A673 (cell line): ENCODE measurements at regions of chr2 and their contacts with region 1.

Region 1: DNA sequence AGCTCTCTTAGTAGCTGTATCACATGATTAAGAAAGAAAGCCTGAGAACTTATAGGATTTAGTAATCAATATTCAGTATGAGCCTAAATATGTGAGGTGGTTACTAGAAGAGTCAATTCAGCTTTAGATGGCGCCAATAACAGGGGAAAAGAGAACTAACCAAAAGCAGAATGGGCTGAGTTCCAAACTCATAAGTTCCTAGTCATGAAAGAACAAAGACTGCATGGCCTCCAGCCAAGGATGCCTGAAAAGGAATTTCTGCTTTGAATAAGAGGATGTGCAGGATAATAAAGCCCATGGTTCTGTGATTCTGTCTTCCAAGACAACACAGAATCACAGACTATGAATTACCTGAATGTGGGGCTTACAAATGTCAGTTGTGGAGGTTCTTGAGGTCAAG is 196.5 kb downstream of the SATB2 start:
- DNase-seq: peak; percentile 90
- H3K4me3 ChIP-seq: no peak overlapping the region
- H3K27ac ChIP-seq: no peak overlapping the region
- H3K4me1 ChIP-seq: no peaks in the 10 kb centered on the region
- H3K27me3 ChIP-seq: no peaks in the 10 kb centered on the region
- CTCF ChIP-seq: peak; percentile 47

Region 2: GRCh38 chr2:199596549-199596948 is 335.3 kb after region 1 on chr2:
- CTCF ChIA-PET with region 1: no interaction called
- POLR2A ChIA-PET with region 1: no interaction called
- intact Hi-C with region 1: loop called (anchors 10 kb)
- DNase-seq: peak; percentile 49
- H3K4me3 ChIP-seq: no peak overlapping the region
- H3K27ac ChIP-seq: no peak overlapping the region
- H3K4me1 ChIP-seq: peaks cover 7% of the 10 kb centered on the region
- H3K27me3 ChIP-seq: no peaks in the 10 kb centered on the region
- CTCF ChIP-seq: peak; percentile 63